ENCODE measurements at regions of chr12 and their contacts with region 1.

Region 1: DNA sequence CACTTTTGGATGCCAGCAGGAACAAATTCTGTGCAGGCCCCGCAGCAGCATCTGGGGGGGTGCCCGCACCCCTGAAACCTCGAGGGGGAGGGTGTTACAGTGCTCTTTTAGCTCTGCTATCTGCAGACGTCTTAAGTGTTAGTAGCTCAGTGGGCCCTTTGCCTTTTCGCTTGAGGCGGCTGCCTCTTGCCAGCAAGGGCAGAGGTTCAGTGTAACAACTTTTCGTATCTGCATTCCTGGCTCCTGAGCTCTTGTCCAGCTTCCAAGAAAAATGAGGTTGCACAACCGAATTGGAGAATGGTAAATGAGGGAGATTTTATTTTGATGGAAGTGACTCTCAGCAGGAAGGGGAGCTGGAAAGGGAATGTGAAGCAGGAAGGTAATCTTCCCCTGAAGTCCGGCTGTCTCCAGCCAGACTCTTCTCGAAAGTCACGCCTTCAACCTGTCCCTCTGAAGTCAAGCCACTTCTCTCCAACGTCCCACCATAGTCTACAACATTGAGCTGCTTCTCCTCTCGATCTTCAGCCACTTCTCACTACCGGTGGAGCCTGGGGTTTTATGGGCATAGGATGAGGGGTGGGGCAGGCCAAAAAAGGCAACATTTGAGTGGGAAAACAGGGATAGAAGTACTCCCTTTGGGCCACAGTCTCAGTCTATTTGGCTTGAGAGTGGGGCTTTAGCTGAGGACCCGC is 17.8 kb downstream of the TAS2R50 start:
- DNase-seq: peak; percentile 94
- H3K4me3 Mint-ChIP-seq: peak overlapping the region; percentile 62
- H3K27ac Mint-ChIP-seq: peak overlapping the region; percentile 63
- H3K4me1 Mint-ChIP-seq: peaks cover 18% of the 10 kb centered on the region
- H3K27me3 Mint-ChIP-seq: no peaks in the 10 kb centered on the region
- CTCF ChIP-seq: no peak

Region 2: GRCh38 chr12:10771132-10771733 is 197.7 kb before region 1 on chr12:
- CTCF ChIA-PET with region 1: no interaction called
- POLR2A ChIA-PET with region 1: no interaction called
- intact Hi-C with region 1: loop called (anchors 10 kb)
- DNase-seq: peak; percentile 56
- H3K4me3 Mint-ChIP-seq: no peak overlapping the region
- H3K27ac Mint-ChIP-seq: no peak overlapping the region
- H3K4me1 Mint-ChIP-seq: no peaks in the 10 kb centered on the region
- H3K27me3 Mint-ChIP-seq: peaks cover 94% of the 10 kb centered on the region
- CTCF ChIP-seq: peak; percentile 68

Region 3: GRCh38 chr12:10941916-10942607 is 26.8 kb before region 1 on chr12:
- CTCF ChIA-PET with region 1: no interaction called
- POLR2A ChIA-PET with region 1: interaction called, 3 read pairs
- intact Hi-C with region 1: loop called (anchors 1 kb)
- DNase-seq: peak; percentile 72
- H3K4me3 Mint-ChIP-seq: no peak overlapping the region
- H3K27ac Mint-ChIP-seq: peak overlapping the region; percentile 78
- H3K4me1 Mint-ChIP-seq: peaks cover 31% of the 10 kb centered on the region
- H3K27me3 Mint-ChIP-seq: no peaks in the 10 kb centered on the region
- CTCF ChIP-seq: no peak